PC-3 (cell line): ENCODE measurements at regions of chr3 and their contacts with region 1.

Region 1: DNA sequence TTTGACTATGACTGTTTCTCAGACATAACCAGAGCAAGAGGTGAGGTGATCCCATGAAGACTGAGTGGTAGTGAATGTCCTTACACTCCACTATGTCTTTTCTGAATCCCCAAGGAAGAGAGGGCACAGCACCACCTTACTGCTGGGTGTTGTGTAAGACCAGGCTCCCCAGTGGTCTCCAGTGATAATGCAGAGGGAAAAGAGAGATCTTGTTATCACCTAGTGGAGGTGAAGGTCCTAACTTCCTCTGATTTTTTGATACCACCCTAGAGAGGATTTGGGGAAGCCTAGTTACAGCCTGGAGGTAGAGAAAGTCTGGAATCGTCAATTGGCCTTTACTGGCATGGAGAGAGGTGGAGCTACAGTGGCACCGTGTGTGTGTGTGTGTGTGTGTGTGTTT is 288.0 kb upstream of the BCHE start:
- DNase-seq: no peak
- ATAC-seq: no peak
- H3K4me3 ChIP-seq: no peak overlapping the region
- H3K27ac ChIP-seq: no peak overlapping the region
- H3K4me1 ChIP-seq: peaks cover 12% of the 10 kb centered on the region
- H3K27me3 ChIP-seq: no peaks in the 10 kb centered on the region
- CTCF ChIP-seq: no peak

Region 2: DNA sequence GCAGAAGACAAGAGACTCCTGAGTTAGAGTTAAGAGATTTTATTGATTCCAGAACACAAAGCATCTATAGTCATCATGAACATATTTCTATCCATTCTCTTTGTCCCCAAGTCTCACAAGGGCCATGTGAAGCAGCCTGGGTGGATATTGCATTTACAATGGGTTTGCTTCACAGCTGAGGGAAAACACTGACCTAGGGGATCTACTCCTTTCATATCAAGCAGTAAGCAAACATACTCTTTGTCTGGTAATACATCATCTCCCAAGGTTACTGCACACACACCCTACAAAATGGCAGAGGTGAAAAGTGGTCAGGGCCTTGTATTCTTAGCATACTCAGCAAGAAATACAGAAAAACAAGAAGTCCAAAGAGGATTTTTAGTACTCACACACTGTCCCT is 20.2 kb before region 1 on chr3:
- CTCF ChIA-PET with region 1: no interaction called
- POLR2A ChIA-PET with region 1: no interaction called
- intact Hi-C with region 1: loop called (anchors 1 kb)
- DNase-seq: no peak
- ATAC-seq: no peak
- H3K4me3 ChIP-seq: no peak overlapping the region
- H3K27ac ChIP-seq: no peak overlapping the region
- H3K4me1 ChIP-seq: no peaks in the 10 kb centered on the region
- H3K27me3 ChIP-seq: no peaks in the 10 kb centered on the region
- CTCF ChIP-seq: no peak

Region 3: GRCh38 chr3:166510382-166510781 is 385.2 kb after region 1 on chr3:
- CTCF ChIA-PET with region 1: no interaction called
- POLR2A ChIA-PET with region 1: no interaction called
- intact Hi-C with region 1: no loop called
- DNase-seq: no peak
- ATAC-seq: no peak
- H3K4me3 ChIP-seq: no peak overlapping the region
- H3K27ac ChIP-seq: no peak overlapping the region
- H3K4me1 ChIP-seq: no peaks in the 10 kb centered on the region
- H3K27me3 ChIP-seq: no peaks in the 10 kb centered on the region
- CTCF ChIP-seq: no peak